CD4-positive, alpha-beta T cell (primary cell): ENCODE measurements at regions of chr18 and their contacts with region 1.

Region 1: DNA sequence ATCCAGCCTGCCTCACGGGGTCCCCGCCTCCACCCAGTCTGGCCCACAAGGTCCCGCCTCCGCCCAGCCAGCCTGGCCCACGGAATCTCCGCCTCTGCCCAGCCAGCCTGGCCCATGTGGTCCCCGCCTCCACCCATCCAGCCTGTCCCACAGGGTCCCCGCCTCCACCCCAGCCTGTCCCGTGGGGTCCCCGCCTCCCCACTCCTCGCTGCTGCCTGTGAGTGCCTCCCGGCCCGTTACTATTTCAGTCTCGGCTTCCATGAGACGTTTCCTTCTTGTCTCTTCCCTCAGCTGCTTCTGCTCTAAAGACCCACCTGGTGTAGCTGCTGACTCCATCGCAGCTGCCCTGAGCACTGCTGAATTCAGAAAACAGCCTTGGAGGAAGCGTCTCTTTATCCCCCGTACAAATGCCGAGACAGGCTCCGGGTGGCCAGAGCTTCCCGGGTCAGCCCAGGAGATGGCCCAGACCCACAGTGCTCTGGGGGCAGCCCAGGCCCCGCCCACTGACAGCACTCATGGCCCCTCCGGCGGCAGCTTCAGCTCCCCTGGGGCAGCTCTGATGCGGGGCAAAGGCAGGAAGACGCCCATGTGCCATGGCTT is 69.8 kb downstream of the NFATC1 start:
- DNase-seq: no peak
- ATAC-seq: no peak
- H3K4me3 ChIP-seq: no peak overlapping the region
- H3K4me3 Mint-ChIP-seq: no peak overlapping the region
- H3K27ac ChIP-seq: no peak overlapping the region
- H3K27ac Mint-ChIP-seq: peak overlapping the region; percentile 24
- H3K4me1 ChIP-seq: peaks cover 2% of the 10 kb centered on the region
- H3K4me1 Mint-ChIP-seq: peaks cover 6% of the 10 kb centered on the region
- H3K27me3 ChIP-seq: no peaks in the 10 kb centered on the region
- H3K27me3 Mint-ChIP-seq: no peaks in the 10 kb centered on the region
- CTCF ChIP-seq: no peak

Region 2: DNA sequence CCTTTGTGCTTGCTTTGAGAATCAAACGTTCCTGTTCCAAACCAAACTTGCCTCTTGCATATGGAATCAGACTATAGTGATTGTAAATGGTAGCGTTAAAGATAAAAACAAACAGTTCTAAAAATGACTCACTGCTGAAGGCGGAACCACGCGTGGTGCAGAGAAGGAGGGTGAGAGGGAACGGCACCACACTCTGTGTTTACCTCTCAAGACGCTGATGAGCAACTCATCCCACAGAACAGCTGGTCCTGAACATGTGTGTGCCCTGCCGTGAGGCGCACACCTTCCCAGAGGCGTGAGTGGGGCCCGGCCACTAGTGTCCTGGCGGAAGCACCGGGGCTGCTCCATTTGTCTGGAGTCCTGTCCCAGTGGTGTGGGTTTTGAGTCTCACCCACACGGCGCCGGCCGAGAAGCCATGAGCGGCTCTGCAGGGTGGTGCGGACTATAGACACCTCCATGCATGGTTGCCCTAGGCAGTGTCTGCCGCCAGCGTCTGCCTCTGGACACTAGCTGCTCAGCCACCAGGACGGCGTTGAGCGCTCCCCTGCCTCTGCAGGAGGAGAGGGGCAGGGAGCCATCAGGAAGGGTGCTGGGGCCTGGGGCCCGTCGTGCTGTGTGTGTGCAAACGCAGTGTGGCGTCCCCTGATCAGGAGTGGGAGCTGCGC is 17.7 kb before region 1 on chr18:
- CTCF ChIA-PET with region 1: no interaction called
- POLR2A ChIA-PET with region 1: no interaction called
- intact Hi-C with region 1: loop called in 1 of 2 experiments (anchors 2 kb)
- DNase-seq: peak in 1 of 14 experiments; percentile 17
- ATAC-seq: peak; percentile 16
- H3K4me3 ChIP-seq: no peak overlapping the region
- H3K4me3 Mint-ChIP-seq: no peak overlapping the region
- H3K27ac ChIP-seq: no peak overlapping the region
- H3K27ac Mint-ChIP-seq: peak overlapping the region; percentile 48
- H3K4me1 ChIP-seq: peaks cover 8% of the 10 kb centered on the region
- H3K4me1 Mint-ChIP-seq: peaks cover 5% of the 10 kb centered on the region
- H3K27me3 ChIP-seq: no peaks in the 10 kb centered on the region
- H3K27me3 Mint-ChIP-seq: no peaks in the 10 kb centered on the region
- CTCF ChIP-seq: no peak

Region 3: DNA sequence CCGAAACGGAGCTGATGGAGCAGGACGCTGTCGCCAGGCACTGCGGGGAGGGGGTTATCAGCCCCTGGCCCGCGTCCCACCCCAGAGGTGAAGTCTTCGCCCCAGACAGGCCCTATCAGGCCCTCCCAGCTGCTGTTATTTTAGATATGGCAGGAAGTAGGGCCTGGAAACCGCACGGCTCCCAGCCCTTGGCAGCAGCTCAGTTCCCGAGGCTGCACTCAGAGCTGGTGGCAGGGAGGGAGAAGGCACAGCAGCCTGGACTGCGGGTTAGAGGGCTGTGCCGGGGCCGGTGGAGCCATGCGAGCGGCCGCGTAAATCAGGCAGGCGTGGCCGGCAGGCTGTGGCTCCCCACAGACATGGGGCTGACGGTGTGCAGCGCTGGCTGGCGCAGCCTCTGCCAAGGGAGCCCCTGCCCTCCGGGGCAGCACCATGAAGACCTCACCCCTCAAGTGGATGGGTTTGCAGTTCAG is 41.6 kb after region 1 on chr18:
- CTCF ChIA-PET with region 1: no interaction called
- POLR2A ChIA-PET with region 1: no interaction called
- intact Hi-C with region 1: loop called in 1 of 2 experiments (anchors 5 kb)
- DNase-seq: peak in 8 of 14 experiments; percentile 2 to 54 (median 39)
- ATAC-seq: peak; percentile 67
- H3K4me3 ChIP-seq: peak overlapping the region; percentile 46
- H3K4me3 Mint-ChIP-seq: peak overlapping the region; percentile 79
- H3K27ac ChIP-seq: peak overlapping the region; percentile 66 to 72
- H3K27ac Mint-ChIP-seq: peak overlapping the region; percentile 94
- H3K4me1 ChIP-seq: peaks cover 53% of the 10 kb centered on the region
- H3K4me1 Mint-ChIP-seq: peaks cover 68% of the 10 kb centered on the region
- H3K27me3 ChIP-seq: no peaks in the 10 kb centered on the region
- H3K27me3 Mint-ChIP-seq: no peaks in the 10 kb centered on the region
- CTCF ChIP-seq: no peak